ENCODE measurements at regions of chr19 and their contacts with region 1.

Region 1: DNA sequence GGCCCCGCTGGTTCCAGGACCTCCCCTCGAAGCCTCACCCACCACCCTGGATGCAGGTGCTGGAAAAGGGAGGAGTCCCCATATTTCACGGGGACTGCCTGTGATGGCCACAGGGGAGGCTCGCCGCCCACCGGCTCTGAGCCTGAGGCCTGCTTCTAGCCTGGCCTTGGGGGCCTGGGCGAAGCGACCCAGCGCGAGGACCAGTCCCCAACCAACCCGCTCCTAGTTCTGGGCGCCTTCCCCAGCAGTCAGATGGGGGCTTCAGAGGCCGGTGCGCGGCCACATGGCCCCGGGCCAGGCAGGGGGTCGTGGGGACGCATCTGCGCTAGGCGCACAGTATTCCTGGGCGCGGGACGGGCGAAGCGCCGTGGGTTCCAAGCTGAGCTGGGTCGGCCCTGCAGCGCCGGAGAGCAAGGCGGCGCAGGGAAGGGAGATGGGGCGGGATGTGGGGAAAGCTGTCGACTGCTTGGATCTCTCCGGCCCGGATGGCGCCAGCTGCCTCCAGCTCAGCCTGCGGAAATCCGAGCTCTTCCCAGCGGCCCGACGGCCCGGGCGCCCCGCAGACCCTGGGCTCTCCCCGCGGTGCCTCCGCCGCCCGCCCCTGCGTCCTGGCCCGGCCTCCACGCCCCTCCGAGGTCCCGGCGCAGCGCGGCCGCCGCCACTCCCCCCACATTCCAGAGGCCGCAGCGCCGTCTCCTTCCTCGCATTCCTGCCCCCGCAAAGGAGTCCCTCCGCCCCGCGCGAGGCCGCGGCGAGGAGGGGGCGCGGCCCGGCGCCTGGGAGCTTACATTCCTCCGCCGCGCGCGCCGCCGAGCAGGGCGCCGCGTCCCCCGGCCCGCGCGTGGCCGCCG is at the start of gene WTIP:
- DNase-seq: peak; percentile 87
- ATAC-seq: peak; percentile 65
- H3K4me3 Mint-ChIP-seq: peak within 1 kb of the TSS; percentile 83
- H3K27ac Mint-ChIP-seq: no peak within 1 kb of the TSS
- H3K4me1 Mint-ChIP-seq: peaks cover 24% of the 10 kb centered on the region
- H3K27me3 Mint-ChIP-seq: peaks cover 31% of the 10 kb centered on the region
- CTCF ChIP-seq: no peak
- total RNA-seq, gene WTIP: 14.3 to 18.1 TPM (median 16.0 TPM) in 3 replicates

Region 2: GRCh38 chr19:34436716-34437115 is 44.5 kb before region 1 on chr19:
- CTCF ChIA-PET with region 1: no interaction called
- POLR2A ChIA-PET with region 1: no interaction called
- DNase-seq: no peak
- ATAC-seq: no peak
- H3K4me3 Mint-ChIP-seq: no peak overlapping the region
- H3K27ac Mint-ChIP-seq: no peak overlapping the region
- H3K4me1 Mint-ChIP-seq: no peaks in the 10 kb centered on the region
- H3K27me3 Mint-ChIP-seq: no peaks in the 10 kb centered on the region
- CTCF ChIP-seq: no peak

Region 3: DNA sequence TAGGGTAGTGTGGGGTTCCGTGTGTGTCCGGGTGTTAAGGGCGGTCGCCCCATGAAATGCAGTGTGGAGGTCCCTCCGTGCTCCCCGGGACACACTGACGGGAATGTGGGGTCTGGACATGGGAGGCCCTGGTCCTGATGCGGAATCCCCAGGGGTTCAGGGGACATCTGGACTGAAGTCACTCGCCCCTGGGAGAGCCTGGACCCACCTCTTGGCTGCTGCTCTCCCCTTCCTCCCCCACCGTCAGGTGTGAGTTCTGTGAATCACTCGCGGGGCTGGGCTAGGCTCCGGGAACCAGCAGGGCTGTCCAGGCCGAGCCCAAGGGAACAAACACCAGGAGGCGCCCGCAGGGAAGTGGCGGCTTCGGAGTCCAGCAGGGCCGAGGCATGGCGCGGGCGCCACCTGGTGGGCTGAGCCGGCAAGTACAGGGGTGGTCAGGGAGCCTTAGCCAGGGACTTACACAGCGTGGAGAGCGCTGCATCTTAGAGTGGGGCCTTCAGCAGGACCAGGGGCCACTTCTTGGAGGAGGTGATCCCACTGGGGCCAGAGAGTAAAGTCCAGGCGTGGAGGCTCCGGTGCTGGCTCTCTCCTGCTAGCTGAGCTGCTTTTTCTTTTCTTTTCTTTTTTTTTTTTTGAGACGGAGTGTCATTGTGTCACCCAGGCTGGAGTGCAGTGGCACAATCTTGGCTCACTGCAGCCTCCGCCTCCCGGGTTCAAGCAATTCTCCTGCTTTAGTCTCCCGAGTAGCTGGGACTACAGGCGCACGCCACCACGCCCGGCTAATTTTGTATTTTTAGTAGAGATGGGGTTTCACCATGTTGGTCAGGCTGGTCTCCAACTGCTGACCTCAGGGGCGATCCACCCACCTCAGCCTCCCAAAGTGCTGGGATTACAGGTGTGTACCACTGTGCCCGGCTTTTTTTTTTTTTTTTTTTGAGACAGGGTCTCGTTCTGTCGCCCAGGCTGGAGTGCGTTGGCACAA is 20.4 kb after region 1 on chr19:
- CTCF ChIA-PET with region 1: interaction called, 28 read pairs
- POLR2A ChIA-PET with region 1: interaction called, 11 read pairs
- DNase-seq: peak; percentile 97
- ATAC-seq: peak; percentile 86
- H3K4me3 Mint-ChIP-seq: no peak overlapping the region
- H3K27ac Mint-ChIP-seq: no peak overlapping the region
- H3K4me1 Mint-ChIP-seq: peaks cover 12% of the 10 kb centered on the region
- H3K27me3 Mint-ChIP-seq: no peaks in the 10 kb centered on the region
- CTCF ChIP-seq: peak; percentile 97

Region 4: DNA sequence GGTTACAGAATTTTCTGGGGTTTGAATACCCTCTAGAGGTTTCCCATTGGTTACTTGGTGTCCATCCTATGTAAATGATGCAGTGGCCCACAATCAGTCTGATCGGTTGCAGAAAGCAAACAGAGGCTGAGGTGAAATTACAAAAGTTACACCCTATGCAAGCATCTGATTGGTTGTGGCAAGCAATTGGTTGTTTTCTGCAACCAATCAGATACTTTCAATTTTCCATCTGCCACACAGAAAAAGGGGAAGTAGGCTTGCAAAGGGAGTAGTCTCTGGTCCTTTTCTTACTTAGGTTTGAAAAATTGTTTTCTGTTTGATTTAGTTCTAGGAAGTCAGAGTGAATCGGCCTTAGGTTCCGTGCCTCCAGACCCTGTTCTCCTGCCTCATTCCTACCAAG is 93.5 kb after region 1 on chr19:
- CTCF ChIA-PET with region 1: no interaction called
- POLR2A ChIA-PET with region 1: no interaction called
- DNase-seq: no peak
- ATAC-seq: no peak
- H3K4me3 Mint-ChIP-seq: no peak overlapping the region
- H3K27ac Mint-ChIP-seq: no peak overlapping the region
- H3K4me1 Mint-ChIP-seq: peaks cover 22% of the 10 kb centered on the region
- H3K27me3 Mint-ChIP-seq: peaks cover 30% of the 10 kb centered on the region
- CTCF ChIP-seq: no peak